Spleen (tissue), 13 donors: ENCODE measurements at regions of chr3 and their contacts with region 1.

Region 1: DNA sequence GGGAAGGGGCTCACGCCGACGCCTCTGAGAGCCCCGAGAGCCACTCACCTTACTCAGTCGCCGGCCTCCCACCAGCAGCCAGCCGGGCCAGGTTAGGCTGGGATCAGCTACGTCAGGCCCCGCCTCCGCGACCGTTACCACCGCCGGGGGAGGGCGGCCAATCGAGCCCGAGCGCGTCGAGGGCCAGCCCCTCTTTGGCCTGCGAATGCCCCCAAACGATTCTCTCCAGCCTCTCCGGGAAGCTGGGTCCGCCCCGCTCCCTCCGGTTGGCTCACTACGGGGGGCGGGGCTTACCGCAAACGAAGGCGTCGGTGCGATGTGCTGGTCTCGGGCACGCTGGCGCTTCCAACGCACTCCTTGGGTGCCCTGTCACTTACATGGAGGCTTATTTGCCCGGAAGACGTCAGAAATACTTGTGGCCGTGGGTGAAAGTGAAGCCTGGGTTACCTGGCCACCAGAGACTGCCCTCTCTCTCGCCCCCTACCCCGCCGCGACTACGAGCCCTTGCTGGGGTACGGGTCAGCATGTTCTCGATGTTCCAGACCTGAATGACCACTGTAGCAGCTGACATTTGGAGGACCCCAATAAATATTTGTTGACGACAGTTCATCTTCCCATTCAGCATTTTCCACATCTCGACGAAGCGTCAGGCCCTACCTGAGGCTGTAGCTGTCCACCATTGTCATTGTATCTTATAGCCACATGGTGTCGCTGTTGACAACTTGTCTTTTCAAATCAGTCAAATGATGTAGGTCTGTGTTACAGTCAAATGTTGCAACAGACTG is at the start of gene CEP70:
- DNase-seq: peak; percentile 97
- H3K4me3 ChIP-seq: peak within 1 kb of the TSS; percentile 61 to 89 (median 74)
- H3K27ac ChIP-seq: peak within 1 kb of the TSS; percentile 71 to 94 (median 86)
- H3K4me1 ChIP-seq: peaks cover 0 to 31% (median 12%) of the 10 kb centered on the region in 6 donors
- H3K27me3 ChIP-seq: peaks cover 0 to 9% (median 0%) of the 10 kb centered on the region in 7 donors
- CTCF ChIP-seq: peak; percentile 82 to 97 (median 95)
- POLR2A ChIP-seq: peak in 2 of 3 donors; percentile 59 to 67
- total RNA-seq, gene CEP70: 10.7 to 19.0 (median 14.7) TPM

Region 2: DNA sequence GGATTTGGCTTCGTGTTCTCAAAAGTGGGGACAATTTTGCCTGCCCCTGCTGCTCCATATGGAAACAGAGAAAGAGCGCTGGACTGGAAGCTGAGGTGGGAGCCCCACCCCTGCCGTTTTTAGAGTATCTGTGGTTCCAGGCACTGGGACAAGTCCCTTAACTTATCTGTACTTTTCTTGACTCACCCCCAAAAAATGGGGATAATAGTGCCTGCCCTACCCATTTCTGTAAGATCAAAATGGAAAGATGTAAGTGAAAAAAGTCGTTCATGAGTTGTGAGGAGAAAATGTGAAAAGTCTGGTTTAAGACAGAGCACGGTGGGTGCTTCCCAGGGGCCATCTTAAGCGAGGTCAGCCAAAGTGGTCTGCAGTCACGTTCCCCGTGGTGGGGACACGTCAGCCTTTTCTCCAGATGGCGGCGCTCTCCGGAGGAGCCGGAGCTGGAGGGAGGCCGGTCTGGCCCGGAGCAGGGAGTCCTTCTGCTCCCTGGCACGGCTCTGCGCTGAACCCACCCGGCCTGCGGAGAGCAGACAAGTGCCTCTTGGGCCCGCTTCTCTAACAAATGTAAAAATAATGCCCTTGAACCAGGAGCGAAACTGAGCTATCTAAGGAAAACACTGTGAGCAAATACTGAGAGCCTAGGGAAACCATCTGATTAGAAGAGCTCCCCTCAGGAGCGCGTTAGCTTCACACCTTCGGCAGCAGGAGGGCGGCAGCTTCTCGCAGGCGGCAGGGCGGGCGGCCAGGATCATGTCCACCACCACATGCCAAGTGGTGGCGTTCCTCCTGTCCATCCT is 584.7 kb before region 1 on chr3 and contains the start of gene CLDN18:
- intact Hi-C with region 1: no loop called
- DNase-seq: no peak
- H3K4me3 ChIP-seq: no peak within 1 kb of the TSS
- H3K27ac ChIP-seq: no peak within 1 kb of the TSS
- H3K4me1 ChIP-seq: no peaks in the 10 kb centered on the region
- H3K27me3 ChIP-seq: no peaks in the 10 kb centered on the region
- CTCF ChIP-seq: no peak
- POLR2A ChIP-seq: no peak
- total RNA-seq, gene CLDN18: not detected

Region 3: DNA sequence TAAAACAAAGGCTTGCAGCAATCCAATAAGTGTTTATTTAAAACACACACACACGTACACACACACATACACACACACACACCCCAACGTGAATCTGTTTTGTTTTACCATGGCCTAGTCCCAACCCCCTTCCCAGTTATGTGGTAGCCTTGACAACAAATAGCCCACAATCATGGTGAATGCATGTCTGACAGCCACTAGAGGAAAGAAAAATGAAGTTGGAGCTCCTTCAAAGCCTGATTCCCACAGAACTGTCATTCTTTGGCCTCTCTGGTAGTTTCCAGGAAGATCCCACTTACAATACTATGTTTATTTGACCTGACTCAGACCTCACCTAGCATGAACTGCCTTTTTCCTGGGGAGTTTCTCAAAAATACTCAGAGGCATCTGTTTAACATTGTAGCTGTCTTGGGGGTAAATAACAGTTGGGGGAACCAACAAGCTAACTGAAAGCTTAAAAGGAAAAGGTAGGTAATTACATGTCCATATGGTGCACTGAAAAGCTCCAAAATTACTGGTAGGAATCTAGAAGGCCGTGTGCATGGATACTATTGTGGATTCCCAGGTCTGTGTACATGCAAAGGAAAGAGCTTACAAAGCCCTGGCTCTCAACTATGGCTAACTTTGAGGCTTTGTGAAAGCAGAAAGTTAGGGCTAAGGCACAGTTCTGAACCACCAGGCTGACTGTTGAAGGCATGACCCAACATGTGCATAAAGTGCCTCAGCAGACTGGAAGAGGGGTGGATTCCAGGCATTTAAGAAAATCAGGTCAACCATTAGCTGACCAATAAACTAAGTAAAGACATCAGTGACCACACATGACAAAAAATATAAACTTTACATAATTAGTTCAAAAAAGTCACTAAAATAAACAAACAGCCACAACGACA is 79.5 kb after region 1 on chr3:
- intact Hi-C with region 1: loop called (anchors 10 kb)
- DNase-seq: no peak
- H3K4me3 ChIP-seq: no peak overlapping the region
- H3K27ac ChIP-seq: no peak overlapping the region
- H3K4me1 ChIP-seq: no peaks in the 10 kb centered on the region
- H3K27me3 ChIP-seq: no peaks in the 10 kb centered on the region
- CTCF ChIP-seq: no peak
- POLR2A ChIP-seq: no peak